PC-3 (cell line): ENCODE measurements at regions of chr3 and their contacts with region 1.

Region 1: DNA sequence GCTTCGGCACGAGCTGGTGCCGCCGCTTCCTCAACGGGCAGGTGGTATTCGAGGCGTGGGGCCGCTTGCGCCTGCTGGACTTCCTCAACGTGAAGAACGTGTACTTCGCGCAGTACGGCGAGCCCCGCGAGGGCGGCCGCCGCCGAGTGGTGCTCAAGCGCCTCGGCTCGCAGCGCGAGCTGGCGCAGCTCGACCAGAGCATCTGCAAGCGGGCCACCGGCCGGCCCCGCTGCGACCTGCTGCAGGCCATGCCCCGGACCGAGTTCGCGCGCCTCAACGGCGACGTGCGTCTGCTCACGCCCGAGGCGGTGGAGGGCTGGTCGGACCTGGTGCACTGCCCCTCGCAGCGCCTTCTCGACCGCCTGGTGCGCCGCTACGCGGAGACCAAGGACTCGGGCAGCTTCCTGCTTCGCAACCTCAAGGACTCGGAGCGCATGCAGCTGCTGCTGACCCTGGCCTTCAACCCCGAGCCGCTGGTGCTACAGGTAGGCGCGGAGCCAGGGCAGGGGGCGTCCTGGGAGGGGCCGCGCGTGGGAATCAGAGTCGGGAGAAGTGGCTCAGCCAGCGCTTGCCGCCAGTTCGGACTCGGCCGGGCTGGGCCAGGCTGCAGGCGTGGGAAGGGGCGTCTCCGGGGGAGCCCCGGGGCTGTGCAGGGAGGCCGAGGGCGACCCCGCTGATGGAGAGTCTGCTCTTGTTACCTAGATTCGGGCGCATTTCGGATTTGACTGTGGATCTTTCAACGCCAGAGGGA is 1.1 kb downstream of the DIPK2A start:
- DNase-seq: peak; percentile 48
- ATAC-seq: peak; percentile 37
- H3K4me3 ChIP-seq: peak overlapping the region; percentile 99
- H3K27ac ChIP-seq: peak overlapping the region; percentile 88
- H3K4me1 ChIP-seq: peaks cover 32% of the 10 kb centered on the region
- H3K27me3 ChIP-seq: no peaks in the 10 kb centered on the region
- CTCF ChIP-seq: peak; percentile 54

Region 2: DNA sequence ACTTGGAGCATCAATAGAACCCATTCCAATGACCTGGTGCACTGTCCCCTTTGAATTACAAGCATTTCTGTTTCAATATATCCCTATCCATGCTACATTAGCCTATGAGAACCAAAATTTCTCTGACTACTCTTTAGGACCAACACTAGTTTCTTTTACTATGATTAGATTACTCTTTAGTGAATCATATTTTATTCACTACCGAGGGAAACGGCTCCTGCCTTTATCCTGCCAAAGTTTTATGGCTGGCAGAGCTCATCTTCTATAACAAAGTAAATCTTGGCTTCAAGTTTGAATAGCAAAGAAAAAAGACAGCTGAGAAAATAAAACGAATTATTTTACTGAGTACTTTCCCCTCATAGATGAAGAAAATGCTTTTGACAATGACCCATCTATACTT is 245.3 kb before region 1 on chr3:
- CTCF ChIA-PET with region 1: no interaction called
- POLR2A ChIA-PET with region 1: no interaction called
- intact Hi-C with region 1: no loop called
- DNase-seq: peak; percentile 18
- ATAC-seq: peak; percentile 90
- H3K4me3 ChIP-seq: no peak overlapping the region
- H3K27ac ChIP-seq: no peak overlapping the region
- H3K4me1 ChIP-seq: no peaks in the 10 kb centered on the region
- H3K27me3 ChIP-seq: no peaks in the 10 kb centered on the region
- CTCF ChIP-seq: no peak

Region 3: DNA sequence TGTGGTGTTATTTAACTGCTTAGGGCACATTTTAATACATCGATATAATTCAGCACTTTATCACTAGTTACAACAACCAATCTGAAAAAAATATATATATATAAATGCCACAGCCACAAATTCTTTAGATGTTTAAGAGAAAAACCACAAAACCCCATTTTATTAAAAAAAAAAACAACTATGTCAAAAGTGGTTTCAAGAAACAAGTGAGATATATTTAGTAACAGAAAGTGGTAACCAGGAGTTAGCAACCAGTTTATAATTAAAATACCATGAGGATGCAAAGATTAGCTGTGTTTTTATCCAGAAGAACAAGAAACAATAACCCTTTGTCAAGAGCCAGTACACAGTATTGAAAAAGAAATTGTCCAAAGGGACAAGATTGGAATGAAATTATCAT is 15.8 kb before region 1 on chr3:
- CTCF ChIA-PET with region 1: no interaction called
- POLR2A ChIA-PET with region 1: no interaction called
- intact Hi-C with region 1: loop called (anchors 1 kb)
- DNase-seq: no peak
- ATAC-seq: no peak
- H3K4me3 ChIP-seq: no peak overlapping the region
- H3K27ac ChIP-seq: no peak overlapping the region
- H3K4me1 ChIP-seq: no peaks in the 10 kb centered on the region
- H3K27me3 ChIP-seq: no peaks in the 10 kb centered on the region
- CTCF ChIP-seq: no peak

Region 4: GRCh38 chr3:144053096-144053495 is 80.4 kb after region 1 on chr3:
- CTCF ChIA-PET with region 1: no interaction called
- POLR2A ChIA-PET with region 1: interaction called, 3 read pairs
- intact Hi-C with region 1: loop called (anchors 5 kb)
- DNase-seq: peak; percentile 91
- ATAC-seq: peak; percentile 80
- H3K4me3 ChIP-seq: no peak overlapping the region
- H3K27ac ChIP-seq: peak overlapping the region; percentile 48
- H3K4me1 ChIP-seq: peaks cover 32% of the 10 kb centered on the region
- H3K27me3 ChIP-seq: no peaks in the 10 kb centered on the region
- CTCF ChIP-seq: no peak

Region 5: DNA sequence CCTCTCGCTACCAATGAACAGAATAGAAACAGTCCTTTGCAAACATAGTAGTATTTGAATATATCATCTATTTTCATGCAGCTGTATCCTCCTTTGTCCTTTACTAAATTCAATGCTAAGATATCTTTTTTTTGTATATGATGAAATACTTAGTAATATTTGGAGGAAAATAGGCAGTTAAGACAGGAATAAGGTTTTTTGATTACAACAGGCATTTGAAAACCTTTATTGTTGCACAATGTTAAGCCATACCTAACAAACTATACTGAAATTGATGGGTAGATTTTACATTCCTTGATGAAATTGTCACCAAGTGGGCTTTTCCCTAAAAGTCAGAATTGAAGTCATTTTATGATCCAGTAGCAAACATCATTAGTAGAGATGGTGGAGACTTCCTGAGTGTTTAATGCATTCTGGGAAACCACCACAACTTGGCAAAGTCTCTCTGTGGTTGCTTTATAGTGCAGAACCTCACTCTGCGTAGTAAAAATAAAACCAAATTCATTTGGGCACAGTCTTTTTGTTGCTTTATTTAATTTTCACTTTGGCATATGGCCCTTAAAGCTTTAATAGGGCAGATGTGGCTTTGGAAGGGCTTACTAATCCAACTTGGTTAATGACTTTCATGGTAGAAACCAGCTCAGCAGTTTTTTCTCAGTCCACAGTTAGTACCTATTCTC is 215.0 kb after region 1 on chr3:
- CTCF ChIA-PET with region 1: no interaction called
- POLR2A ChIA-PET with region 1: no interaction called
- intact Hi-C with region 1: loop called (anchors 1 kb)
- DNase-seq: peak; percentile 55
- ATAC-seq: peak; percentile 88
- H3K4me3 ChIP-seq: no peak overlapping the region
- H3K27ac ChIP-seq: peak overlapping the region; percentile 58
- H3K4me1 ChIP-seq: peaks cover 6% of the 10 kb centered on the region; the same call in 1 of the 2 replicates
- H3K27me3 ChIP-seq: no peaks in the 10 kb centered on the region
- CTCF ChIP-seq: no peak

Region 6: GRCh38 chr3:144429719-144430121 is 457.0 kb after region 1 on chr3:
- CTCF ChIA-PET with region 1: interaction called, 3 read pairs
- POLR2A ChIA-PET with region 1: interaction called, 3 read pairs
- intact Hi-C with region 1: loop called (anchors 5 kb)
- DNase-seq: peak; percentile 79
- ATAC-seq: peak; percentile 75
- H3K4me3 ChIP-seq: no peak overlapping the region
- H3K27ac ChIP-seq: peak overlapping the region; percentile 89
- H3K4me1 ChIP-seq: peaks cover 24% of the 10 kb centered on the region; the same call in 1 of the 2 replicates
- H3K27me3 ChIP-seq: no peaks in the 10 kb centered on the region
- CTCF ChIP-seq: no peak

Region 7: GRCh38 chr3:144556392-144556791 is 583.7 kb after region 1 on chr3:
- CTCF ChIA-PET with region 1: no interaction called
- POLR2A ChIA-PET with region 1: no interaction called
- intact Hi-C with region 1: loop called (anchors 10 kb)
- DNase-seq: peak; percentile 3
- ATAC-seq: no peak
- H3K4me3 ChIP-seq: no peak overlapping the region
- H3K27ac ChIP-seq: no peak overlapping the region
- H3K4me1 ChIP-seq: no peaks in the 10 kb centered on the region; the same call in 1 of the 2 replicates
- H3K27me3 ChIP-seq: no peaks in the 10 kb centered on the region
- CTCF ChIP-seq: no peak